Activated CD4-positive, alpha-beta T cell treated with anti-CD3 and anti-CD28 coated beads for 36 hours (primary cell): ENCODE measurements at regions of chr4 and their contacts with region 1.

Region 1: DNA sequence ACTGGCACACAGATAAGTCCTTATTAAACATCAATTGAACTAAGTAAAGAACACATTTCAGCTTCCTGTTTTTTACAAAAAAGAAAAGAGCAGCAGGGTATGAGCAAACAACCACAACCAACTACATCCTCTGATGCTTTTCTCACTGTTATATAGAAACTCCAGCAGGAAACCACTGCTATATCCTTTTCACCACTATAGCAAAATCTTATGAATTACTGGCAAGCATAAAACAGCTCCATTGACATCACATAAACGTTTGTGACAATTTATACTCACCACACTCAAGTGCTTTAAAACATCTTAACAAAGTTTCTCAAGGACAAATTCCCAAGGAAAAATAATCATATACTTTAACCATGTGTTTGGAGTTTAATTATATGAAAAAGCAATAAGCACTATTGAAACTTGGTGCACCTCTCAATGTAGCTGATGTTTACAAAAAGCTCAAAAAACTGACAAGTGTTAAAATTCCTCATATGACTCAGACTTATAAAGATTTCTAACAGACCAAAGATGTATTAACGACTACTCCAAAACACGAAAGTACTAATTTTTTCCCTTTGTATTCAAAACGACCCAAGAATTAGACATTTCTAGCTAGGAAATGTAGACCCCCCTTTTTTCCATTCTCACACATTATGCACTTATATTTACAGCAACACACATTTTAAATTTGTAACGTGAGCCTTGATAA is 12.9 kb downstream of the GPRIN3 start:
- DNase-seq: no peak
- ATAC-seq: peak; percentile 66
- H3K4me3 Mint-ChIP-seq: peak overlapping the region; percentile 53
- H3K27ac Mint-ChIP-seq: peak overlapping the region; percentile 94
- H3K4me1 Mint-ChIP-seq: peaks cover 83% of the 10 kb centered on the region
- H3K27me3 Mint-ChIP-seq: no peaks in the 10 kb centered on the region

Region 2: DNA sequence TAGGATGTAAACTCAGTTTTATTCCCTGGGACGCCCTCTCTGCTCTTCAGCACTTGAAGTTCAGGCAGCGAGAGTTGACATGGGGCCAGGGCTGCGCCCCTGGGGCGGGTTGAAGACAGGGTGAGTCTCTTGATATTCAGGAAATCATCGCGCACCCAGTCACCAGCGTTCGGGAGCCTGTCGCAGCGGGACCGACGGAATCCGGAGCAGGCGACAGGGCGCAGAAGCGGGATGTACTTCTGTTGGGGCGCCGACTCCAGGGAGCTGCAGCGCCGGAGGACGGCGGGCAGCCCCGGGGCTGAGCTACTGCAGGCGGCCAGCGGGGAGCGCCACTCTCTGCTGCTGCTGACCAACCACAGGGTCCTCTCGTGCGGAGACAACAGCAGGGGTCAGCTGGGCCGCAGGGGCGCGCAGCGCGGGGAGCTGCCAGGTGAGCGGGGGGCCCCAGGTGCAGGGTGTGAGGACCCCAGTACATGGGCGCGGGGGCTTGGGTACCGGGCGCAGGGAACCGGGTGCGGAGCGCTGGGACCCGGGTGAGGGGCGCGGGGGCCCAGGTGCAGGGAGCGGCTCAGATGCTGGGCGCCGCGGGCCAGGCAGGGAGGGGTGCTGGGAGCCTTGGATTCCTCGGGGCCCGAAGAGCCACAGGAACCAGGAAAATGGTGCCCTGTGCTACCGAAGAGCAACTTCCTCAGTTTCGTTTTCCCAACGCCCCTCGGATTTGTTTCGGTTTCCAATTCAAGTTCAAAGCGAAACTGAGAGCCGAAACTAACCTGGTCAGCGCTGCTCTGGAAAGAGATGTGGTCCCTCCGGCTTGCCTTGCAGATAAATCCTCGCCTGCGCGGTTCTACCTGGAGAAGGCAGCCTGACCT is 915.8 kb before region 1 on chr4 and contains the start of gene HERC6:
- CTCF ChIA-PET with region 1: no interaction called
- POLR2A ChIA-PET with region 1: no interaction called
- intact Hi-C with region 1: loop called in 1 of 2 experiments (anchors 10 kb)
- DNase-seq: peak; percentile 88
- ATAC-seq: peak; percentile 47
- H3K4me3 Mint-ChIP-seq: peak within 1 kb of the TSS; percentile 75
- H3K27ac Mint-ChIP-seq: peak within 1 kb of the TSS; percentile 84
- H3K4me1 Mint-ChIP-seq: peaks cover 39% of the 10 kb centered on the region
- H3K27me3 Mint-ChIP-seq: no peaks in the 10 kb centered on the region
- total RNA-seq, gene HERC6: 7.3 to 9.3 TPM

Region 3: GRCh38 chr4:88803600-88804096 is 491.1 kb before region 1 on chr4:
- CTCF ChIA-PET with region 1: no interaction called
- POLR2A ChIA-PET with region 1: no interaction called
- intact Hi-C with region 1: loop called in 1 of 2 experiments (anchors 2 kb)
- DNase-seq: peak; percentile 35
- ATAC-seq: peak; percentile 63
- H3K4me3 Mint-ChIP-seq: no peak overlapping the region
- H3K27ac Mint-ChIP-seq: no peak overlapping the region
- H3K4me1 Mint-ChIP-seq: peaks cover 14% of the 10 kb centered on the region
- H3K27me3 Mint-ChIP-seq: peaks cover 5% of the 10 kb centered on the region

Region 4: GRCh38 chr4:89196056-89196674 is 98.6 kb before region 1 on chr4:
- CTCF ChIA-PET with region 1: no interaction called
- POLR2A ChIA-PET with region 1: no interaction called
- intact Hi-C with region 1: no loop called
- DNase-seq: no peak
- ATAC-seq: no peak
- H3K4me3 Mint-ChIP-seq: no peak overlapping the region
- H3K27ac Mint-ChIP-seq: no peak overlapping the region
- H3K4me1 Mint-ChIP-seq: no peaks in the 10 kb centered on the region
- H3K27me3 Mint-ChIP-seq: no peaks in the 10 kb centered on the region

Region 5: GRCh38 chr4:89226665-89227574 is 67.8 kb before region 1 on chr4:
- CTCF ChIA-PET with region 1: interaction called, 11 read pairs
- POLR2A ChIA-PET with region 1: no interaction called
- intact Hi-C with region 1: loop called in 1 of 2 experiments (anchors 2 kb)
- DNase-seq: peak; percentile 85
- ATAC-seq: peak; percentile 85
- H3K4me3 Mint-ChIP-seq: no peak overlapping the region
- H3K27ac Mint-ChIP-seq: no peak overlapping the region
- H3K4me1 Mint-ChIP-seq: peaks cover 15% of the 10 kb centered on the region
- H3K27me3 Mint-ChIP-seq: no peaks in the 10 kb centered on the region

Region 6: DNA sequence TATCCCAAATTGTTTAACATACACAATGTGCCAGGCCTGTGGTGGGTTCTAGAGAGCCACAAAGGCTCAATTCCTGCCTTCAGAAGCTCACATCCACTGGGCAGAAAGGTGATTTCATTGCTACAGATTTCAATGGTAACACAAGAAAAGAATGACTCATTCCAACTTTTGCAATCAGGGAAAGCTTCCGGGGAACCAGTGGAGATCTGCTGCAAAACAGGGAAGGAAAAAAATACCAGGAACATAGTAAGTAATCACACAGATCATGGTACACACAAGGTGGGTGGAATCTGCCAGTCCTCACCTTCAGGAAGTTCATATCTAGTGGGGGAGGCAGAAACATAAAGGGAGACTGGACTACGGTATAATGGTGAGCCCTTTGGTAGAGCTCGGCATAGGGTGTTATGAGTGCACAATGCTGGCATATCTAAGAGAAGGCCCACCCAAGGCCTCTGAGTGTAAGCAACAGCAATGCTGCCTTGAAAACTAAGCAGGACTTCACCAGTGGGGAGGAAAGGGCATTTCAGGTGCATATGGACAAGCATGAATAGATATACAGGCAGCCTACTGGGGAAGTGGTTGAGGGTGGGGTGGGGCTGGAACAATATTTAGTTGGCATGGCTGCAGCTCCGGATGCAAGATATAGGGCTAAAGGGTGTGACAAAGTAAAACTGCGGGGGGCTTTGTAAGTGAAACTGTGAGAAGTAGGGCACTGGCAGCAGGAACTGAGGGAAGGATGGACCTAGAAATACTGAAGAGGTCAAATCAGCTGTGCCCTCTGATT is 11.3 kb before region 1 on chr4:
- CTCF ChIA-PET with region 1: interaction called, 14 read pairs
- POLR2A ChIA-PET with region 1: interaction called, 5 read pairs
- intact Hi-C with region 1: loop called in 1 of 2 experiments (anchors 1 kb)
- DNase-seq: peak; percentile 33
- ATAC-seq: peak; percentile 20
- H3K4me3 Mint-ChIP-seq: no peak overlapping the region
- H3K27ac Mint-ChIP-seq: peak overlapping the region; percentile 68
- H3K4me1 Mint-ChIP-seq: peaks cover 72% of the 10 kb centered on the region
- H3K27me3 Mint-ChIP-seq: no peaks in the 10 kb centered on the region

Region 7: GRCh38 chr4:89316931-89317366 is 22.2 kb after region 1 on chr4:
- CTCF ChIA-PET with region 1: interaction called, 4 read pairs
- POLR2A ChIA-PET with region 1: interaction called, 3 read pairs
- intact Hi-C with region 1: loop called in 1 of 2 experiments (anchors 1 kb)
- DNase-seq: no peak
- ATAC-seq: peak; percentile 88
- H3K4me3 Mint-ChIP-seq: peak overlapping the region; percentile 37
- H3K27ac Mint-ChIP-seq: peak overlapping the region; percentile 84
- H3K4me1 Mint-ChIP-seq: peaks cover 42% of the 10 kb centered on the region
- H3K27me3 Mint-ChIP-seq: no peaks in the 10 kb centered on the region

Region 8: GRCh38 chr4:89469930-89470375 is 175.2 kb after region 1 on chr4:
- CTCF ChIA-PET with region 1: no interaction called
- POLR2A ChIA-PET with region 1: no interaction called
- intact Hi-C with region 1: loop called in 1 of 2 experiments (anchors 5 kb)
- DNase-seq: peak; percentile 39
- ATAC-seq: peak; percentile 95
- H3K4me3 Mint-ChIP-seq: peak overlapping the region; percentile 29
- H3K27ac Mint-ChIP-seq: peak overlapping the region; percentile 83
- H3K4me1 Mint-ChIP-seq: peaks cover 25% of the 10 kb centered on the region
- H3K27me3 Mint-ChIP-seq: no peaks in the 10 kb centered on the region

Region 9: DNA sequence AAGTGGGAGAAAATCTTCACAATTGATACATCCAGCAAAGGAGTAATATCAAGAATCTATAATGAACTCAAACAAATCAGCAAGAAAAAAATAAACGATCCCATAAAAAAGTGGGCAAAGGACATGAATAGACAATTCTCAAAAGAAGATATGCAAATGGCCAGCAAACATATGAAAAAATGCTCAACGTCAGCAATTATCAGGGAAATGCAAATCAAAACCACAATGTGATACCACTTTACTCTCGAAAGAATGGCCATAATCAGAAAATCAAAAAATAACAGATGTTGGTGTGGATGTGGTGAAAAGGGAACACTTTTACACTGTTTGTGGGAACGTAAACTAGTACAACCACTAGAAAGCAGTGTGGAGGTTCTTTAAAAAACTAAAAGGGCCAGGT is 718.2 kb after region 1 on chr4:
- CTCF ChIA-PET with region 1: no interaction called
- POLR2A ChIA-PET with region 1: no interaction called
- intact Hi-C with region 1: no loop called
- DNase-seq: no peak
- ATAC-seq: no peak
- H3K4me3 Mint-ChIP-seq: no peak overlapping the region
- H3K27ac Mint-ChIP-seq: no peak overlapping the region
- H3K4me1 Mint-ChIP-seq: no peaks in the 10 kb centered on the region
- H3K27me3 Mint-ChIP-seq: peaks cover 5% of the 10 kb centered on the region